ENCODE measurements at regions of chr9 and their contacts with region 1.

Region 1: DNA sequence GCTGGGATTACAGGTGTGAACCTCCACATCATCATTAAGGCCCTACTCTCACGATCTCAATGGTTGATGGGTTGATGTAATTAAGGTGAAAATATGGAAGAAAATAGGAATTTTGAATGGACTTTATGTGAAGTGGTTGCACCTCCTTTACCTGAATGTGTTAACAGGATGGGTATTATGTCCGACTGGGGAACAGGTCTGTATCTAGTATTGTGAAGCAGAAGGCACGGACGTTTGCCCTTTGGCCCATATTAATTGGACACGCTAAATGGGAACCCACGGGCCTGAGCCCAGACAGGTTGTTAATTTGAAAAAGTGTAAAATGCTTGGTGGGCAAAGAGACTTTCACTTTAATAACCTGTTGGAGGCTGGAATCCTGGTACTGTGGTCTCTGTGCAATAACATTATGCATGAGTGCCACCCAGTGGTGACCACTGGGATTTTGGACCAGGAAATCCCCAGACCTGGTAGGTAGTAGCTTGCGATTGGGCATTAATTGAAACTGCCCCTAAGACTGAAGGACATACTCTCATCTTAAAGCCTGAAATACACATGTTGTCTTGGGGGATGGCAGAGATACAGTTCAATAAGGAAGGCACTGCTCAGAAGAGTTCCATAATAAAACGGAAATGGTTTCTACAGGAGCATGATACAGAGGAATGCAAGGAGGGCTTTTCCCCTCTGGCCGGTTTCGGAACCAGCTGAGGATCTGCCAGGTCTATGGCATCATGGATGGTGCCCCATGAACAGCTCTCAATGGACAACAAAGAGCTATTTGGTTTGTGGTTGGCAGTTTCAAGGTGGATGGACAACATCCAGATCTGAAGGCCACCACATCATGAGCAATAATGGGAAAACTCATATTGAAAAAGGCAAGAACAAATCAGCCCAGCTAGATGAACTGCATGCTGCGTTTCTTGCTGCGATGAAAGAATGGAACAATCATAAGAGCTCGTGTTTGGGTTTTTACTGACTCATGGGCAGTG is 26.2 kb upstream of the BICD2 start:
- ATAC-seq: peak; percentile 85 to 99 (median 90)
- H3K4me3 ChIP-seq: no peak overlapping the region
- H3K27ac ChIP-seq: no peak overlapping the region
- H3K4me1 ChIP-seq: no peaks in the 10 kb centered on the region

Region 2: GRCh38 chr9:92686954-92687353 is 103.9 kb before region 1 on chr9:
- in situ Hi-C with region 1: loop called in 1 of 9 experiments (anchors 25 kb)
- ATAC-seq: peak in 2 of 8 experiments; percentile 47 to 67
- H3K4me3 ChIP-seq: no peak overlapping the region
- H3K27ac ChIP-seq: no peak overlapping the region
- H3K4me1 ChIP-seq: no peaks in the 10 kb centered on the region